ENCODE measurements at regions of chr21 and their contacts with region 1.

Region 1: DNA sequence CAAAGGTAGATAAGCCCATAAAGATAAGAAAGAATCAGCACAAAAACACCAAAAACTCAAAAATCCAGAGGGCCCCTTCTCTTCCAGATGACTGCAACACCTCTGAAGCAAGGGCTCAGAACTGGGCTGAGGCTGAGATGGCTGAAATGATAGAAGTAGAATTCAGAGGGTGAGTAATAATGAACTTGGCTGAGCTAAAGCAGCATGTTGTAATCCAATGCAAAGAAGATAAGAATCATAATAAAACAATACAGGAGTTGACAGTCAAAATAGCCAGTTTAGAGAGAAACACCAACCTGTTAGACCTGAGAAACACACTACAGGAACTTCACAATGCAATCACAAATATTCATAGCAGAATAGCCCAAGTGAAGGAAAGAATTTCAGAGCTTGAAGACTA is 406.9 kb upstream of the CXADR start:
- DNase-seq: no peak
- H3K4me3 ChIP-seq: no peak overlapping the region
- H3K4me3 Mint-ChIP-seq: no peak overlapping the region
- H3K27ac ChIP-seq: no peak overlapping the region
- H3K27ac Mint-ChIP-seq: no peak overlapping the region
- H3K4me1 ChIP-seq: no peaks in the 10 kb centered on the region
- H3K4me1 Mint-ChIP-seq: no peaks in the 10 kb centered on the region
- H3K27me3 ChIP-seq: no peaks in the 10 kb centered on the region
- H3K27me3 Mint-ChIP-seq: no peaks in the 10 kb centered on the region
- CTCF ChIP-seq: no peak

Region 2: GRCh38 chr21:16134134-16134533 is 971.8 kb before region 1 on chr21:
- intact Hi-C with region 1: loop called in 1 of 2 experiments (anchors 10 kb)
- DNase-seq: no peak
- H3K4me3 ChIP-seq: no peak overlapping the region
- H3K4me3 Mint-ChIP-seq: no peak overlapping the region
- H3K27ac ChIP-seq: no peak overlapping the region
- H3K27ac Mint-ChIP-seq: no peak overlapping the region
- H3K4me1 ChIP-seq: no peaks in the 10 kb centered on the region
- H3K4me1 Mint-ChIP-seq: no peaks in the 10 kb centered on the region
- H3K27me3 ChIP-seq: no peaks in the 10 kb centered on the region
- H3K27me3 Mint-ChIP-seq: no peaks in the 10 kb centered on the region
- CTCF ChIP-seq: no peak

Region 3: GRCh38 chr21:17045214-17045853 is 60.6 kb before region 1 on chr21:
- intact Hi-C with region 1: no loop called
- DNase-seq: no peak
- H3K4me3 ChIP-seq: no peak overlapping the region
- H3K4me3 Mint-ChIP-seq: no peak overlapping the region
- H3K27ac ChIP-seq: no peak overlapping the region
- H3K27ac Mint-ChIP-seq: no peak overlapping the region
- H3K4me1 ChIP-seq: no peaks in the 10 kb centered on the region
- H3K4me1 Mint-ChIP-seq: no peaks in the 10 kb centered on the region
- H3K27me3 ChIP-seq: no peaks in the 10 kb centered on the region
- H3K27me3 Mint-ChIP-seq: no peaks in the 10 kb centered on the region
- CTCF ChIP-seq: no peak

Region 4: DNA sequence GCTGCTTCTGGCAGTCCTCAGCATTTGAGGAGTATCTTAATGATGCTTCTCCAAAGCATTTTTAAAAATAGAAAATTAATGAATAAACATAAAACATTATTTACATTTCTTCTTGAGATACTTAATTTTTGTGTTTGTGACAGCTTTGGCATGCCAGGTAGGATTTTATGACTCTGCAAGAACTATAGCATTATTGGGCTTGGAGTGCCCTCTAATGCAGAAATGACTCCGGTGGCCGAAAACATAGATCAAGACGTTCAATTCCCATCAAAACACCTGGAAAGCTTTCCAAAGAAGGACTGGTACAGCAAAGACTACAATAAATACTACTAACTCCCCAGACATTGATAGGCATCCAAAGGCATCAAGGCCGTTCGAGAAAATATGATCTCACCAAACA is 40.5 kb after region 1 on chr21:
- intact Hi-C with region 1: no loop called
- DNase-seq: no peak
- H3K4me3 ChIP-seq: no peak overlapping the region
- H3K4me3 Mint-ChIP-seq: no peak overlapping the region
- H3K27ac ChIP-seq: no peak overlapping the region
- H3K27ac Mint-ChIP-seq: no peak overlapping the region
- H3K4me1 ChIP-seq: no peaks in the 10 kb centered on the region
- H3K4me1 Mint-ChIP-seq: no peaks in the 10 kb centered on the region
- H3K27me3 ChIP-seq: no peaks in the 10 kb centered on the region
- H3K27me3 Mint-ChIP-seq: peaks cover 0 to 3% (median 0%) of the 10 kb centered on the region in 3 donors
- CTCF ChIP-seq: no peak